H1 (cell line): ENCODE measurements at regions of chr12 and their contacts with region 1.

Region 1: DNA sequence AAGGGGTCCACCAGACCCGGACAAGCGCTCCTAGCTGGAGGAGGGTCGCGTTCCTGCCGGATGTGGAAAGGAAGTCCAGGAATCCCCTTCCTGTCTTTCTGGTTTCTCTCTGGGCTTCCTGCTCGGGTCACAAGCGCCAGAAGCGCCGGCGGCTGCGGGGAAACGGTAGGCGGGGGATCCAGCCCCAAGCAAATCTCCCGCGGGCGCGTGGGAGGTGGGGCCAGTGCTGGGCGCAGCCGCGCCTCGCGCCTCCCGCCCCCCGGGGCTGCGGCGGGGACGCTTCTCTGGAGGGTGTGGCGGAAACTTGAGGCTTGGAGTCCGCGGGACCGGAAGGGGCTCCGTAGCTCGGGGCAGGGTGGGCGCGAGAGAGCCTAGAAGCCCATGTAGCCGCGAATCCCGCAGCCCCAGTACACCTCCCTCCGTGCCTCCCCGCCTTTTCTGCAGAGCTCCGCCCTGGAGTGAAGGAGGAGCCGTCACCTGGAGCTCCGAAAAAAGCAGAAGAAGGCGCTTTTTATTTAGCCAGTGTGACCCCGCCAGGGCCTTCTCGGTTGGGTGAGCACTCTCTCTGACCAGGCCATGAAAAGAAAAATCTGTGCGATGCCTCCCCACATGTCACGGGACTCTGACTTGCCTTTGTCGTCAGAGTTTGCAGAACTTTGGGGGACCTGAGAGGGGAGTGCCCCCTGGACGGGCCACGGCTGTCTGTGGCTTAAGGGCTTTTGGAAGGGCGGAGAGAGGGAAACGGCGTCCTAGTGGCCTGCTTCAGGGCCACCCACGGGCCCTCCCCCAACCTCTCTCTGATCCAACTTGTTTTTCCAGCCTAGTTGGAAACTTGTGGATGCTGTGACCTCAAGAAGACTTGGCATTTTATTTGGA is 21.4 kb upstream of the CLEC2D start:
- DNase-seq: peak; percentile 41 to 80
- H3K4me3 ChIP-seq: peak overlapping the region; percentile 63 to 85 (median 80)
- H3K27ac ChIP-seq: peak overlapping the region; percentile 69
- H3K4me1 ChIP-seq: peaks cover 2 to 7% (median 5%) of the 10 kb centered on the region in 4 experiments; a peak in 3 of 7 replicates
- H3K27me3 ChIP-seq: no peaks in the 10 kb centered on the region
- CTCF ChIP-seq: no peak
- EP300 ChIP-seq: no peak
- POLR2A ChIP-seq: peak; percentile 82 to 87
- RAD21 ChIP-seq: no peak

Region 2: DNA sequence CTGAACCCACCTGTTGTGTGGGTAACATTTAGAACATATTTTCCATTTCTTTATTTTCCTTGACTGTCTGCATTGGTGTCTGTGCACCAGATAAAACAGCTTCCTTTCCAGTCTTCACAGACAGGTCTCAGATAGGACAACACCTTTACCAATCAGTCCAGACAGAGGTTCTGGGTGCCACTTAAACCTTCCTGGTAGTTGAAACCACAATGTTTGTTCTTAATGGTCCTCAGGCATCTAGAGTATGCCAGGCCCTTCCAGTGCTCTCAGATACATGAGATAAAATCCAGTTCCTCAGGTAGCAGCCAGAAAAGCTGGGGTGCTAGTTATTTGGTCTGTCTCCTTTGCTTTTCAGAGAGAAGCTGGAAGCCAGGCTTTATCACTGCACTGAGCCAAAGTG is 14.4 kb after region 1 on chr12:
- CTCF ChIA-PET with region 1: no interaction called
- POLR2A ChIA-PET with region 1: interaction called, 10 read pairs
- DNase-seq: no peak
- H3K4me3 ChIP-seq: no peak overlapping the region
- H3K27ac ChIP-seq: no peak overlapping the region
- H3K4me1 ChIP-seq: no peaks in the 10 kb centered on the region
- H3K27me3 ChIP-seq: no peaks in the 10 kb centered on the region
- CTCF ChIP-seq: no peak
- EP300 ChIP-seq: no peak
- POLR2A ChIP-seq: no peak
- RAD21 ChIP-seq: no peak